ENCODE measurements at regions of chr7 and their contacts with region 1.

Region 1: DNA sequence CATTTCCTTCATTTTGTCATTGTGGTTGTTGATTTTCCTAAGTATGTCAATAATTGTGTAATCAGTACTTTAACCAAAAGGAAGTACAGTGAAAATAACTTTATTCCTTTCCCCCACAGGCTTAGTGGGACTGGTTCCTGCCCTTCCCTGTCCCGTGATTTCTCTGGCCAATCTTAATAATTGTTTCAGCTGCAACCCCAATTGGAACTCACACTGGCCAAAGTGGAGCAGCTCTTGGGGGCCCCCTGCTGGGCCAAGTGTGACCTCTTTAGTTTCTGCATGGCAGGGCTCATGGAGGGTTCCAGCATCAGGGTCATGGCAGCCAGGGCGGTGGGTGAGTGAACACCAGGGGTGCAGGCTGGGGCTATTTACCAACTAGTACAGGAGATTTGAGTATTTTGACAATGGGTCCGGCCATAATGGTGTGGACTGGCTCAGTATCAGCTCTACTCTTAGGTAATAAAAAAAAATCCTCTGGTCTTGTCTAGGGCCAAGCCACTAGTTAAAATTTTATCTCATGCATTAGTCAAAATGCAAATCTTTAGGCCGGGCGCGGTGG is 31.7 kb downstream of the CYCS start:
- DNase-seq: peak; percentile 86 to 90
- ATAC-seq: peak; percentile 94
- H3K4me3 ChIP-seq: peak overlapping the region; percentile 55
- H3K27ac ChIP-seq: peak overlapping the region; percentile 78 to 79
- H3K4me1 ChIP-seq: peaks cover 9% of the 10 kb centered on the region; the same call in 1 of the 3 replicates
- CTCF ChIP-seq: peak; percentile 86
- EP300 ChIP-seq: no peak
- POLR2A ChIP-seq: no peak
- RAD21 ChIP-seq: peak; percentile 83 to 88

Region 2: GRCh38 chr7:24722386-24723177 is 370.8 kb before region 1 on chr7:
- CTCF ChIA-PET with region 1: interaction called, 12 read pairs
- POLR2A ChIA-PET with region 1: no interaction called
- DNase-seq: peak in 1 of 2 experiments; percentile 42
- ATAC-seq: peak; percentile 36 to 76; a peak in 4 of 6 replicates
- H3K4me3 ChIP-seq: no peak overlapping the region
- H3K27ac ChIP-seq: peak overlapping the region; percentile 9; a peak in 2 of 6 replicates
- H3K4me1 ChIP-seq: peaks cover 22% of the 10 kb centered on the region
- CTCF ChIP-seq: peak; percentile 26; the same call in 2 of the 3 replicates
- EP300 ChIP-seq: no peak
- POLR2A ChIP-seq: no peak
- RAD21 ChIP-seq: peak; percentile 36 to 61; a peak in 4 of 5 replicates

Region 3: GRCh38 chr7:24819916-24820689 is 273.2 kb before region 1 on chr7:
- CTCF ChIA-PET with region 1: interaction called, 280 read pairs
- POLR2A ChIA-PET with region 1: interaction called, 15 read pairs
- DNase-seq: peak; percentile 81 to 91
- ATAC-seq: peak; percentile 86 to 87
- H3K4me3 ChIP-seq: peak overlapping the region; percentile 26; the same call in 2 of the 3 replicates
- H3K27ac ChIP-seq: peak overlapping the region; percentile 87 to 88
- H3K4me1 ChIP-seq: peaks cover 44% of the 10 kb centered on the region
- CTCF ChIP-seq: peak; percentile 94
- EP300 ChIP-seq: no peak
- POLR2A ChIP-seq: no peak
- RAD21 ChIP-seq: peak; percentile 93 to 94

Region 4: GRCh38 chr7:24926623-24927524 is 166.5 kb before region 1 on chr7:
- CTCF ChIA-PET with region 1: no interaction called
- POLR2A ChIA-PET with region 1: no interaction called
- DNase-seq: no peak
- ATAC-seq: no peak
- H3K4me3 ChIP-seq: no peak overlapping the region
- H3K27ac ChIP-seq: no peak overlapping the region
- H3K4me1 ChIP-seq: peaks cover 22% of the 10 kb centered on the region; the same call in 2 of the 3 replicates
- CTCF ChIP-seq: no peak
- EP300 ChIP-seq: no peak
- POLR2A ChIP-seq: no peak
- RAD21 ChIP-seq: no peak

Region 5: DNA sequence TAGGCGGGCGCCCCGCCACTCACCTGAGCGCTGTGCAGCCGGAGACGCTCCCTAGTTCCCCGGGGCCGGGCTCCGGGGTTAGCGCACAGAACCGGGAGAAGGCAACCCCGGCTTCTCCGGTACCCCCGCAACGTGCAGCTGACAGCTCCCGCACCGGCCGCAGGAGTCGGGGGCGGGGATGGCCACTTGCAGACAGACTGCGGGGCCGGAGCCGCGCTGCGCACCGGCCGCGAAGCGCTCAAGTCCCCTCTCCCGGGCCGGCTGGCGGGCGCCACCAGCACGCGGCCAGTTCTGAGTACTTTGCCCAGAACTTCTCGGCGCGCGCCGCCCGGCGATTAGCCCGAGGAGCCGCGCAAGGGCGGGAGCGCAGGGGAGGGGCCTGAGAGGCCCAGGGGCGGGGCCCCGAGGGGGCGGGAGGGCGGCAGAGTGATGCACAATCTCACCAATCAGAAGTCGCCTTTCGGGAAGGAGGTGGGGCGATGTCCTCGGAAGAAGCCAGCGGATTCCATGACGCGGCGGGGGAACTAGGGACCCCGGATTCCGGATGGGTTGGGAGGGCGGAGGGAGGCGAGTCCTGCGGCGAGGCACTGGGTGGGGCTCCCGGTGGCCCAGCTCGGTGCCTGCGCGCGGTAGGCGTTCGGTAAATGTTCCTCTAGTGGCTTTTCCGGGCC is 113.3 kb before region 1 on chr7 and contains the start of gene OSBPL3:
- CTCF ChIA-PET with region 1: interaction called, 53 read pairs
- POLR2A ChIA-PET with region 1: interaction called, 6 read pairs
- DNase-seq: peak; percentile 79 to 94
- ATAC-seq: peak; percentile 78 to 89
- H3K4me3 ChIP-seq: peak within 1 kb of the TSS; percentile 75
- H3K27ac ChIP-seq: peak within 1 kb of the TSS; percentile 81 to 90
- H3K4me1 ChIP-seq: peaks cover 15% of the 10 kb centered on the region; the same call in 2 of the 3 replicates
- CTCF ChIP-seq: no peak
- EP300 ChIP-seq: no peak
- POLR2A ChIP-seq: peak; percentile 57
- RAD21 ChIP-seq: peak; percentile 2 to 3; a peak in 1 of 5 replicates
- polyA plus RNA-seq, gene OSBPL3: 17.4 and 17.8 TPM in 2 replicates

Region 6: GRCh38 chr7:25075459-25075858 is 17.9 kb before region 1 on chr7:
- CTCF ChIA-PET with region 1: interaction called, 35 read pairs
- POLR2A ChIA-PET with region 1: no interaction called
- DNase-seq: peak in 1 of 2 experiments; percentile 19
- ATAC-seq: no peak
- H3K4me3 ChIP-seq: no peak overlapping the region
- H3K27ac ChIP-seq: no peak overlapping the region
- H3K4me1 ChIP-seq: peaks cover 9% of the 10 kb centered on the region
- CTCF ChIP-seq: no peak
- EP300 ChIP-seq: no peak
- POLR2A ChIP-seq: no peak
- RAD21 ChIP-seq: no peak

Region 7: DNA sequence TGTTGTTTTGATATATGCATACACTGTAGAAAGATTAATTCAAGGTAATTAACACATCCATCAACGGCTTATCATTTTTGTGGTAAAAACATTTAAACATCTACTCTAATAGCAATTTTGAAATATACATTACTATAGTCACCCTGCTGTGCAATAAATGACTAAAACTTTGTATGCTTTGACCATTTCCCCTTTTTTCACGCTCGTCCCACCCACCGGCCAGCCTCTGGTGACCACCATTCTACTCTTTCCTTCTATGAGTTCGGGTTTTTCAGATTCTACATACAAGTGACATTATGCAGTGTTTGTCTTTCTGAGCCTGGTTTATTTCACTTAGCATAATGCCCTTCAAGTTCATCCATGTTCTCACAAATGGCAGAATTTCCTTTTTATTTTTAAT is 10.4 kb after region 1 on chr7:
- CTCF ChIA-PET with region 1: interaction called, 26 read pairs
- POLR2A ChIA-PET with region 1: no interaction called
- DNase-seq: no peak
- ATAC-seq: no peak
- H3K4me3 ChIP-seq: no peak overlapping the region
- H3K27ac ChIP-seq: no peak overlapping the region
- H3K4me1 ChIP-seq: no peaks in the 10 kb centered on the region
- CTCF ChIP-seq: no peak
- EP300 ChIP-seq: no peak
- POLR2A ChIP-seq: no peak
- RAD21 ChIP-seq: no peak